Lower leg skin (tissue), 4 donors: ENCODE measurements at regions of chr19 and their contacts with region 1.

Region 1: GRCh38 chr19:30183807-30184490 is 188.2 kb upstream of the ZNF536 start:
- DNase-seq: no peak
- H3K4me3 ChIP-seq: no peak overlapping the region
- CTCF ChIP-seq: no peak
- POLR2A ChIP-seq: no peak

Region 2: GRCh38 chr19:30204721-30205120 is 20.8 kb after region 1 on chr19:
- intact Hi-C with region 1: loop called (anchors 1 kb)
- DNase-seq: peak; percentile 4 to 62
- H3K4me3 ChIP-seq: no peak overlapping the region
- CTCF ChIP-seq: no peak
- POLR2A ChIP-seq: no peak